CD4-positive, alpha-beta T cell (primary cell): ENCODE measurements at regions of chr1 and their contacts with region 1.

Region 1: GRCh38 chr1:88877382-88877825 is 14.0 kb downstream of the GTF2B start:
- DNase-seq: peak in 3 of 14 experiments; percentile 32 to 38 (median 35)
- ATAC-seq: no peak
- H3K4me3 ChIP-seq: no peak overlapping the region
- H3K4me3 Mint-ChIP-seq: peak overlapping the region; percentile 34
- H3K27ac ChIP-seq: no peak overlapping the region
- H3K27ac Mint-ChIP-seq: peak overlapping the region; percentile 44
- H3K4me1 ChIP-seq: peaks cover 16% of the 10 kb centered on the region
- H3K4me1 Mint-ChIP-seq: peaks cover 69% of the 10 kb centered on the region
- H3K27me3 ChIP-seq: no peaks in the 10 kb centered on the region
- H3K27me3 Mint-ChIP-seq: no peaks in the 10 kb centered on the region
- CTCF ChIP-seq: peak; percentile 90

Region 2: DNA sequence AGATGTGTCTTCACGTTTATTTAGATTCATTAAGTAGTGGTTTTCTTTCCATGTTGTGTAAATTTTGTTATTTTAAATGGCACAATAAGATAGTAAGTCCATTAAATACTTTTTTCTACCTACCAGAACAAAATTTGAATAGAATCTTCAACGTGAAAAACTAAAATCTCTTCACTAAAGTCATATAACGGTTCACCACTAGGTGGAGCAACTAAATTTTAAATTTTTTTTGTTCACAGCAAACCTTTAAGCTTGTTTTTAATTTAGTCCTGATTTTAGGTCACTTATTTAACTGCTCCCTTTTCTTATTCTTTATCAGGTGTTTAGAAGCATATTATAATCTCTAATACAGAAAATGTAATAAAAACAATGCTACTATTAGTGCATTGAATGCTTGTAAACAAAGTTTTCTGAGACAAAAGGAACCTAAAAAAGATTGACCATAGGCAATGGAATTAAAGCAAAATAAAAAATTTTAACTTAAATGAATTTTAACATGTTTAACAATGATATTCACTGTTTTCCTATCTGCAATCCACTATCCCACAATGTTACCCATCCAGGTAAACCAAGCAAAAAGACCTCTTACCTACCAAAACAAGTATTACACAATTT is 221.6 kb before region 1 on chr1:
- CTCF ChIA-PET with region 1: no interaction called
- POLR2A ChIA-PET with region 1: interaction called, 3 read pairs
- intact Hi-C with region 1: loop called (anchors 2 to 5 kb)
- DNase-seq: peak in 3 of 14 experiments; percentile 39 to 62 (median 60)
- ATAC-seq: no peak
- H3K4me3 ChIP-seq: no peak overlapping the region
- H3K4me3 Mint-ChIP-seq: no peak overlapping the region
- H3K27ac ChIP-seq: no peak overlapping the region
- H3K27ac Mint-ChIP-seq: no peak overlapping the region
- H3K4me1 ChIP-seq: no peaks in the 10 kb centered on the region
- H3K4me1 Mint-ChIP-seq: peaks cover 16% of the 10 kb centered on the region
- H3K27me3 ChIP-seq: no peaks in the 10 kb centered on the region
- H3K27me3 Mint-ChIP-seq: no peaks in the 10 kb centered on the region
- CTCF ChIP-seq: peak; percentile 83

Region 3: GRCh38 chr1:88780485-88780884 is 96.9 kb before region 1 on chr1:
- CTCF ChIA-PET with region 1: no interaction called
- POLR2A ChIA-PET with region 1: no interaction called
- intact Hi-C with region 1: no loop called
- DNase-seq: no peak
- ATAC-seq: no peak
- H3K4me3 ChIP-seq: no peak overlapping the region
- H3K4me3 Mint-ChIP-seq: no peak overlapping the region
- H3K27ac ChIP-seq: no peak overlapping the region
- H3K27ac Mint-ChIP-seq: no peak overlapping the region
- H3K4me1 ChIP-seq: no peaks in the 10 kb centered on the region
- H3K4me1 Mint-ChIP-seq: no peaks in the 10 kb centered on the region
- H3K27me3 ChIP-seq: no peaks in the 10 kb centered on the region
- H3K27me3 Mint-ChIP-seq: no peaks in the 10 kb centered on the region
- CTCF ChIP-seq: no peak

Region 4: GRCh38 chr1:88800382-88801051 is 76.9 kb before region 1 on chr1:
- CTCF ChIA-PET with region 1: no interaction called
- POLR2A ChIA-PET with region 1: no interaction called
- intact Hi-C with region 1: loop called (anchors 1 to 5 kb)
- DNase-seq: peak in 11 of 14 experiments; percentile 10 to 68 (median 17)
- ATAC-seq: peak; percentile 88
- H3K4me3 ChIP-seq: no peak overlapping the region
- H3K4me3 Mint-ChIP-seq: no peak overlapping the region
- H3K27ac ChIP-seq: no peak overlapping the region
- H3K27ac Mint-ChIP-seq: no peak overlapping the region
- H3K4me1 ChIP-seq: no peaks in the 10 kb centered on the region
- H3K4me1 Mint-ChIP-seq: peaks cover 13% of the 10 kb centered on the region
- H3K27me3 ChIP-seq: no peaks in the 10 kb centered on the region
- H3K27me3 Mint-ChIP-seq: no peaks in the 10 kb centered on the region
- CTCF ChIP-seq: peak; percentile 75